Spleen (tissue), 13 donors: ENCODE measurements at regions of chr4 and their contacts with region 1.

Region 1: GRCh38 chr4:48779998-48780742 is at the start of gene FRYL:
- DNase-seq: peak; percentile 99
- H3K4me3 ChIP-seq: peak within 1 kb of the TSS; percentile 96 to 99 (median 98)
- H3K27ac ChIP-seq: peak within 1 kb of the TSS; percentile 93 to 100 (median 98)
- H3K4me1 ChIP-seq: peaks cover 29 to 51% (median 42%) of the 10 kb centered on the region in 6 donors
- H3K27me3 ChIP-seq: no peaks in the 10 kb centered on the region
- CTCF ChIP-seq: peak in 2 of 11 experiments; percentile 6 to 40
- POLR2A ChIP-seq: peak; percentile 14 to 68 (median 26)
- total RNA-seq, gene FRYL: 88.7 to 118 (median 101) TPM

Region 2: GRCh38 chr4:48578132-48578968 is 201.8 kb before region 1 on chr4:
- intact Hi-C with region 1: no loop called
- DNase-seq: no peak
- H3K4me3 ChIP-seq: no peak overlapping the region
- H3K27ac ChIP-seq: no peak overlapping the region
- H3K4me1 ChIP-seq: peaks cover 0 to 10% (median 2%) of the 10 kb centered on the region in 6 donors
- H3K27me3 ChIP-seq: no peaks in the 10 kb centered on the region
- CTCF ChIP-seq: peak; percentile 65 to 93 (median 87)
- POLR2A ChIP-seq: no peak

Region 3: DNA sequence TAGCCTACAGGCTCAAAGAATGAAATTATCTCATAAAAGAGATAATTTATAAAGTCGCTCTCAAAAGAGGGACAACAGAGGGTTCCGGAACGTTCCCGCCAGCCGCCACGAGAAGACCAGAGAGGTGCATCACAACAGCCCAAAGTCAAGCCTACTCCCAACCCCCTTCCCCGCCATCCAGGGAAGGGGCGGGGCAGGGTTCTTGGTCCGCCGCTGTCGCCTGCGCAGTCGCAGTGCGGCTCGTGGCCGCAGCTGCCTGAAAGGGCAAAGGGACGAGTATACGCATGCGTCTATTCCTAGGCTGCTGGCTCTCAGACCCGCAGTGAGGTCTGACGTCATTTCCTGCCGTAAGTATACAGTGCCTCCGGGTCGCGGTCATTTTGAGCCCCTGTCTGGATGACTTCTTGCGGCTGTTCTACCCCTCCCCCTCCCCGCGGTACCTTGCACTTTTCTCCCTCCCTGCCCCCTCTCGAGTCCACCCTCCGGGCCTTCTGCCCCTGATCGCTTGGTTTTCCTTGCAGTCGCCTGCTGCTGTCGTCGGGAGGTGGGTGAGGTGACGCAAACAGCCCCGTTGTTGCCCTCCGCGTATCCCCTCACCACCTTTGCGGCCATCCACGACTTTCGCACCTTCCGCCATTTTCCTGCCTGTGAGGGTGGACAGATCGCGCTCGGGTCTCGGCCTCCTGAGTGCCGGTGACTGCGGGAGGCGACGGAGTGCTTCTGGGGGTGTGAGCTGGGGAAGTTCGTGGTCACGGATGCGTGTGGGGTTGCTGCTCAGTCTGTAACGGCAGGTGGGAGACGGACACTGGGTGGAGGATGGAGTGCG is 50.7 kb after region 1 on chr4 and contains the start of gene OCIAD1:
- intact Hi-C with region 1: loop called (anchors 10 kb)
- DNase-seq: peak; percentile 98
- H3K4me3 ChIP-seq: peak within 1 kb of the TSS; percentile 59 to 89 (median 80)
- H3K27ac ChIP-seq: peak within 1 kb of the TSS; percentile 92 to 97 (median 96)
- H3K4me1 ChIP-seq: peaks cover 6 to 41% (median 26%) of the 10 kb centered on the region in 6 donors
- H3K27me3 ChIP-seq: no peaks in the 10 kb centered on the region
- CTCF ChIP-seq: peak in 2 of 11 experiments; percentile 6 to 23
- POLR2A ChIP-seq: no peak
- total RNA-seq, gene OCIAD1: 86.7 to 114 (median 99.2) TPM